Naive thymus-derived CD4-positive, alpha-beta T cell (primary cell): ENCODE measurements at regions of chr16 and their contacts with region 1.

Region 1: GRCh38 chr16:17018585-17018939 is 452.2 kb downstream of the XYLT1 start:
- DNase-seq: no peak
- ATAC-seq: no peak
- H3K4me3 ChIP-seq: no peak overlapping the region
- H3K4me3 Mint-ChIP-seq: no peak overlapping the region
- H3K27ac ChIP-seq: no peak overlapping the region
- H3K27ac Mint-ChIP-seq: no peak overlapping the region
- H3K4me1 ChIP-seq: peaks cover 0 to 3% of the 10 kb centered on the region in 2 donors
- H3K4me1 Mint-ChIP-seq: peaks cover 4 to 29% (median 9%) of the 10 kb centered on the region in 7 donors
- H3K27me3 ChIP-seq: no peaks in the 10 kb centered on the region
- H3K27me3 Mint-ChIP-seq: peaks cover 0 to 2% (median 0%) of the 10 kb centered on the region in 5 donors

Region 2: GRCh38 chr16:16960785-16961184 is 57.8 kb before region 1 on chr16:
- CTCF ChIA-PET with region 1: no interaction called
- POLR2A ChIA-PET with region 1: no interaction called
- intact Hi-C with region 1: loop called in 1 of 2 experiments (anchors 10 kb)
- DNase-seq: no peak
- ATAC-seq: no peak
- H3K4me3 ChIP-seq: no peak overlapping the region
- H3K4me3 Mint-ChIP-seq: no peak overlapping the region
- H3K27ac ChIP-seq: no peak overlapping the region
- H3K27ac Mint-ChIP-seq: no peak overlapping the region
- H3K4me1 ChIP-seq: no peaks in the 10 kb centered on the region
- H3K4me1 Mint-ChIP-seq: peaks cover 0 to 3% (median 0%) of the 10 kb centered on the region in 7 donors
- H3K27me3 ChIP-seq: peaks cover 0 to 4% of the 10 kb centered on the region in 2 donors
- H3K27me3 Mint-ChIP-seq: peaks cover 0 to 9% (median 8%) of the 10 kb centered on the region in 5 donors

Region 3: GRCh38 chr16:17101646-17102045 is 83.1 kb after region 1 on chr16:
- CTCF ChIA-PET with region 1: no interaction called
- POLR2A ChIA-PET with region 1: no interaction called
- intact Hi-C with region 1: loop called in 1 of 2 experiments (anchors 10 kb)
- DNase-seq: no peak
- ATAC-seq: no peak
- H3K4me3 ChIP-seq: no peak overlapping the region
- H3K4me3 Mint-ChIP-seq: no peak overlapping the region
- H3K27ac ChIP-seq: no peak overlapping the region
- H3K27ac Mint-ChIP-seq: peak overlapping the region in 2 of 9 donors; percentile 39 to 44
- H3K4me1 ChIP-seq: peaks cover 4 to 9% of the 10 kb centered on the region in 2 donors
- H3K4me1 Mint-ChIP-seq: peaks cover 9 to 30% (median 19%) of the 10 kb centered on the region in 7 donors
- H3K27me3 ChIP-seq: no peaks in the 10 kb centered on the region
- H3K27me3 Mint-ChIP-seq: no peaks in the 10 kb centered on the region

Region 4: GRCh38 chr16:17529982-17530765 is 511.6 kb after region 1 on chr16:
- CTCF ChIA-PET with region 1: no interaction called
- POLR2A ChIA-PET with region 1: no interaction called
- intact Hi-C with region 1: loop called in 1 of 2 experiments (anchors 10 kb)
- DNase-seq: peak; percentile 11 to 71 (median 54)
- ATAC-seq: peak; percentile 85
- H3K4me3 ChIP-seq: peak overlapping the region; percentile 97
- H3K4me3 Mint-ChIP-seq: peak overlapping the region; percentile 78 to 95 (median 89)
- H3K27ac ChIP-seq: peak overlapping the region; percentile 52
- H3K27ac Mint-ChIP-seq: peak overlapping the region; percentile 90 to 98 (median 93)
- H3K4me1 ChIP-seq: peaks cover 4 to 6% of the 10 kb centered on the region in 2 donors
- H3K4me1 Mint-ChIP-seq: peaks cover 8 to 36% (median 25%) of the 10 kb centered on the region in 7 donors
- H3K27me3 ChIP-seq: no peaks in the 10 kb centered on the region
- H3K27me3 Mint-ChIP-seq: peaks cover 0 to 4% (median 0%) of the 10 kb centered on the region in 5 donors

Region 5: DNA sequence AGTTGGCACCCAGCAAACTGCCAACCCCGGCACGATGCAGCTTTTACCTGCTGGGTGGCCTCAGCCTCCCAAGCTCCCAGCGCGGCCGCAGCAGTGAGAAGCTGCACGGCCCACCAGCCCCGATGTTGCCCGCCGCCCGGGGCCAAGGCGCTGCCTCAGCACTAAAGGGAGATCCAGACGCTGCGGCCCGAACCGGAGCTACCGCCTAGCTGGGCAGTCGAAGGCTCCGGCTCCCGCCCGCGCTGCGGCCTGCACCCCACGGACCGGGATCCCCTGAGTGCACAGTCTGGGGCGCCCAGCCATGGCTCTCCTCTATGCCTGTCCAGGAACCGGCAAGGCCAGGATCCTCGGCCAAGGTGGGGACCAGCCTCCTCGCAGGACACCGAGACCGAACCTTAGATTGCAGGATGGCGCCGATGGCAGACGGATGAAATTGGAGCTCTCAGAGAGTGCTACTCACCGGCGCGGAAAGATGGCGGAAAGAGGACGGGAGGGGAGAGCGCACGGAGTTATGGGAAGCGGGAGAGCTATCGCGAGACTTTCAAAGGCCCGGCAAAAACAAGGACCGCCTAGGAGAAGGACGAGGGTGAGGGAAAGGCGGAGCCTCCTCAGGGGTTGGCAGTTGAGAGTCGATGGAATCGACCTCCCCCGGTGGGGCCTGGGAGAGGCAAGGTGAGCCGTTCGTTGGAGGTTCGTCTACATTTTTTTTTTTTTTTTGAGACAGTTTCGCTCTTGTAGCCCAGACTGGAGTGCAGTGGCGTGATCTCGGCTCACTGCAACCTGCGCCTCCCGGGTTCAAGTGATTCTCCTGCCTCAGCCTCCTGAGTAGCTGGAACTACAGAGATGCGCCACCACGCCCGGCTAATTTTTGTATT is 1771.5 kb after region 1 on chr16 and contains the start of gene RPS15A:
- CTCF ChIA-PET with region 1: no interaction called
- POLR2A ChIA-PET with region 1: no interaction called
- intact Hi-C with region 1: loop called in 1 of 2 experiments (anchors 10 kb)
- DNase-seq: peak; percentile 72 to 97 (median 91)
- ATAC-seq: peak; percentile 98
- H3K4me3 ChIP-seq: peak within 1 kb of the TSS; percentile 98
- H3K4me3 Mint-ChIP-seq: peak within 1 kb of the TSS; percentile 92 to 99 (median 96)
- H3K27ac ChIP-seq: peak within 1 kb of the TSS; percentile 91
- H3K27ac Mint-ChIP-seq: peak within 1 kb of the TSS; percentile 89 to 96 (median 94)
- H3K4me1 ChIP-seq: peaks cover 22 to 43% of the 10 kb centered on the region in 2 donors
- H3K4me1 Mint-ChIP-seq: peaks cover 35 to 63% (median 50%) of the 10 kb centered on the region in 7 donors
- H3K27me3 ChIP-seq: no peaks in the 10 kb centered on the region
- H3K27me3 Mint-ChIP-seq: peaks cover 0 to 2% (median 0%) of the 10 kb centered on the region in 5 donors
- total RNA-seq, gene RPS15A: 2,060 to 3,897 (median 3,815) TPM